Activated naive CD4-positive, alpha-beta T cell treated with anti-CD3 and anti-CD28 coated beads for 36 hours (primary cell): ENCODE measurements at regions of chr7 and their contacts with region 1.

Region 1: GRCh38 chr7:149742075-149742701 is 31.2 kb downstream of the ZNF467 start:
- DNase-seq: peak; percentile 71
- H3K4me3 Mint-ChIP-seq: peak overlapping the region; percentile 61
- H3K27ac Mint-ChIP-seq: no peak overlapping the region
- H3K4me1 Mint-ChIP-seq: peaks cover 11% of the 10 kb centered on the region
- H3K27me3 Mint-ChIP-seq: peaks cover 34% of the 10 kb centered on the region

Region 2: GRCh38 chr7:149662591-149663095 is 79.5 kb before region 1 on chr7:
- CTCF ChIA-PET with region 1: interaction called, 60 read pairs
- intact Hi-C with region 1: loop called (anchors 1 kb)
- DNase-seq: peak; percentile 83
- H3K4me3 Mint-ChIP-seq: no peak overlapping the region
- H3K27ac Mint-ChIP-seq: no peak overlapping the region
- H3K4me1 Mint-ChIP-seq: no peaks in the 10 kb centered on the region
- H3K27me3 Mint-ChIP-seq: peaks cover 15% of the 10 kb centered on the region

Region 3: DNA sequence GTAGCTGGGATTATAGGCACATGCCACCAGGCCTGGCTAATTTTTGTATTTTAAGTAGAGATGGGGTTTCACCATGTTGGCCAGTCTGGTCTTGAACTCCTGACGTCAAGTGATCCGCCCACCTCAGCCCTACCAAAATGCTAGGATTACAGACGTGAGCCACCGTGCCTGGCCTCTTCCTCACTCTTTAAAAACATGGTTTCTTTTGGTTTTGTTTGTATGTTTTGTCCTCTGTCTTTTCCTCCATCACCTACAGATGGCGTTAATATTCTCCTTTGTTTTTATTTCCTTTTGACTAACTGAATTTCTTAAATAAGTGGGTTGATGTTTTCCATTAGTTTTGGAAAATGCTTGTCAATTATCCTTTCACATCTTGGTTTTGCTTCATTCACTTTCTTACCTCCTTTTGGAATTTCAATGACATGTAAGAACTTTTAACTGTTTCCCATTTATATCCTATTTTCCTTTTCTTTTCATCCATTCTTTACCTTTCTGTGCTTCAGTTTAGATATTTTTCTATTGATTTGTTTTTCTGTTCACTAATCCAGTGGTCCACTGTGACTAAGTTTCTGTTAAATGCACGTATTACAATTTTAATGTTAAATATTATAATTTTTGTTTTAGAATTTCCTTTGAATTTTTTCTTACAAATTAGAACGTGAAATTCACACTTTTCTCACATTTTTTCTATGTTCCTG is 72.9 kb before region 1 on chr7:
- CTCF ChIA-PET with region 1: interaction called, 60 read pairs
- intact Hi-C with region 1: loop called (anchors 1 kb)
- DNase-seq: peak; percentile 34
- H3K4me3 Mint-ChIP-seq: no peak overlapping the region
- H3K27ac Mint-ChIP-seq: no peak overlapping the region
- H3K4me1 Mint-ChIP-seq: no peaks in the 10 kb centered on the region
- H3K27me3 Mint-ChIP-seq: peaks cover 29% of the 10 kb centered on the region

Region 4: GRCh38 chr7:149714050-149714909 is 27.9 kb before region 1 on chr7:
- CTCF ChIA-PET with region 1: interaction called, 3 read pairs
- intact Hi-C with region 1: loop called (anchors 1 kb)
- DNase-seq: peak; percentile 94
- H3K4me3 Mint-ChIP-seq: peak overlapping the region; percentile 73
- H3K27ac Mint-ChIP-seq: no peak overlapping the region
- H3K4me1 Mint-ChIP-seq: peaks cover 17% of the 10 kb centered on the region
- H3K27me3 Mint-ChIP-seq: no peaks in the 10 kb centered on the region

Region 5: GRCh38 chr7:149799397-149800171 is 57.4 kb after region 1 on chr7:
- CTCF ChIA-PET with region 1: interaction called, 4 read pairs
- intact Hi-C with region 1: loop called (anchors 5 kb)
- DNase-seq: peak; percentile 75
- H3K4me3 Mint-ChIP-seq: no peak overlapping the region
- H3K27ac Mint-ChIP-seq: no peak overlapping the region
- H3K4me1 Mint-ChIP-seq: no peaks in the 10 kb centered on the region
- H3K27me3 Mint-ChIP-seq: no peaks in the 10 kb centered on the region